PC-3 (cell line): ENCODE measurements at regions of chr11 and their contacts with region 1.

Region 1: DNA sequence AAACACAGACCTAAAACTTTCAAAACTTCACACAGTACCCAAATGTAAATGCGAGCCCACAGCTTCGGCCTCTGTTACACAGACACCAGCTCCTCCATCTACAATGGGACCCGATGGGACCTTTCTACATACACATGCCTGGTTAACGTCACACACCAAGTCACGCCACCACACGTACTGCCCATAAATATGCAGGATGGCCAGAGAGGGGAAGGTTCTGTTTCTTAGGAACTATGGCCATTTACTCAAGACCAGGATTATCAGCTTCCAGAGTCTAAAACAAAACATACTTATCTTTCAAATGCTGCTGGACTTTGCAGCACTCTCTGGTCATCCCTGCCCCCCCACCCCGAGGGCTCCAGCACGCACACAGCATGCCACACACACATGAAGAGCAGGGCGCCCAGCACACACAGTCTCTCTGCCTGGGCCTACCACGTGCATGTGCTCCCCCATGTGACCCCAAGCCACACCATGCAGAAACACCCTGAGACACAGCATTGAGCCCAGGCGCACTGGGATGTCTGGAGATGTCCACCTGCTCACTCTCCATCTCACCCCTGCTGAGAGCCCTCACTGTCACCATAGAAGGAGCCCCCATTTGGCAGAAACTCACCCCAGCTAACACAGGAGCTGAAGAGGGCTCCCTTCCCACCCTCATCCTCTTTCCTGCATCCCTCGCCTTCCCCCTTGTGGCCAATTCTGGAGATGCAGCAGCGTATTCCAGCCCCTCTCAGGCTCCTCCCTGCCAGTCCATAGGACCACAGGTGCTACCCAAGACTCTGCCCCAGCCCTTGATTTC is 61.8 kb downstream of the SLC22A12 start:
- DNase-seq: peak; percentile 93
- ATAC-seq: peak; percentile 91
- H3K4me3 ChIP-seq: no peak overlapping the region
- H3K27ac ChIP-seq: no peak overlapping the region
- H3K4me1 ChIP-seq: no peaks in the 10 kb centered on the region
- H3K27me3 ChIP-seq: no peaks in the 10 kb centered on the region
- CTCF ChIP-seq: peak; percentile 94

Region 2: GRCh38 chr11:64448599-64449556 is 203.9 kb before region 1 on chr11:
- CTCF ChIA-PET with region 1: interaction called, 4 read pairs
- POLR2A ChIA-PET with region 1: no interaction called
- intact Hi-C with region 1: loop called (anchors 1 kb)
- DNase-seq: peak; percentile 90
- ATAC-seq: peak; percentile 90
- H3K4me3 ChIP-seq: peak overlapping the region; percentile 62
- H3K27ac ChIP-seq: no peak overlapping the region
- H3K4me1 ChIP-seq: peaks cover 23% of the 10 kb centered on the region
- H3K27me3 ChIP-seq: no peaks in the 10 kb centered on the region
- CTCF ChIP-seq: peak; percentile 93

Region 3: GRCh38 chr11:64516226-64516625 is 136.6 kb before region 1 on chr11:
- CTCF ChIA-PET with region 1: no interaction called
- POLR2A ChIA-PET with region 1: no interaction called
- intact Hi-C with region 1: no loop called
- DNase-seq: no peak
- ATAC-seq: no peak
- H3K4me3 ChIP-seq: no peak overlapping the region
- H3K27ac ChIP-seq: no peak overlapping the region
- H3K4me1 ChIP-seq: no peaks in the 10 kb centered on the region
- H3K27me3 ChIP-seq: peaks cover 84% of the 10 kb centered on the region
- CTCF ChIP-seq: peak; percentile 58

Region 4: GRCh38 chr11:64553551-64554201 is 99.1 kb before region 1 on chr11:
- CTCF ChIA-PET with region 1: interaction called, 3 read pairs
- POLR2A ChIA-PET with region 1: no interaction called
- intact Hi-C with region 1: loop called (anchors 1 kb)
- DNase-seq: peak; percentile 65
- ATAC-seq: peak; percentile 54
- H3K4me3 ChIP-seq: no peak overlapping the region
- H3K27ac ChIP-seq: no peak overlapping the region
- H3K4me1 ChIP-seq: peaks cover 5% of the 10 kb centered on the region; the same call in 1 of the 2 replicates
- H3K27me3 ChIP-seq: peaks cover 6% of the 10 kb centered on the region; the same call in 1 of the 2 replicates
- CTCF ChIP-seq: peak; percentile 98

Region 5: GRCh38 chr11:64562728-64563685 is 89.8 kb before region 1 on chr11:
- CTCF ChIA-PET with region 1: interaction called, 12 read pairs
- POLR2A ChIA-PET with region 1: no interaction called
- intact Hi-C with region 1: no loop called
- DNase-seq: no peak
- ATAC-seq: no peak
- H3K4me3 ChIP-seq: no peak overlapping the region
- H3K27ac ChIP-seq: no peak overlapping the region
- H3K4me1 ChIP-seq: 0 out of 2 replicates have a peak, but pooled peaks cover 9% of the 10 kb centered on the region
- H3K27me3 ChIP-seq: no peaks in the 10 kb centered on the region
- CTCF ChIP-seq: no peak

Region 6: GRCh38 chr11:64688534-64688982 is 35.8 kb after region 1 on chr11:
- CTCF ChIA-PET with region 1: interaction called, 11 read pairs
- POLR2A ChIA-PET with region 1: no interaction called
- intact Hi-C with region 1: no loop called
- DNase-seq: peak; percentile 92
- ATAC-seq: peak; percentile 97
- H3K4me3 ChIP-seq: peak overlapping the region; percentile 61
- H3K27ac ChIP-seq: no peak overlapping the region
- H3K4me1 ChIP-seq: no peaks in the 10 kb centered on the region
- H3K27me3 ChIP-seq: peaks cover 16% of the 10 kb centered on the region
- CTCF ChIP-seq: peak; percentile 94

Region 7: DNA sequence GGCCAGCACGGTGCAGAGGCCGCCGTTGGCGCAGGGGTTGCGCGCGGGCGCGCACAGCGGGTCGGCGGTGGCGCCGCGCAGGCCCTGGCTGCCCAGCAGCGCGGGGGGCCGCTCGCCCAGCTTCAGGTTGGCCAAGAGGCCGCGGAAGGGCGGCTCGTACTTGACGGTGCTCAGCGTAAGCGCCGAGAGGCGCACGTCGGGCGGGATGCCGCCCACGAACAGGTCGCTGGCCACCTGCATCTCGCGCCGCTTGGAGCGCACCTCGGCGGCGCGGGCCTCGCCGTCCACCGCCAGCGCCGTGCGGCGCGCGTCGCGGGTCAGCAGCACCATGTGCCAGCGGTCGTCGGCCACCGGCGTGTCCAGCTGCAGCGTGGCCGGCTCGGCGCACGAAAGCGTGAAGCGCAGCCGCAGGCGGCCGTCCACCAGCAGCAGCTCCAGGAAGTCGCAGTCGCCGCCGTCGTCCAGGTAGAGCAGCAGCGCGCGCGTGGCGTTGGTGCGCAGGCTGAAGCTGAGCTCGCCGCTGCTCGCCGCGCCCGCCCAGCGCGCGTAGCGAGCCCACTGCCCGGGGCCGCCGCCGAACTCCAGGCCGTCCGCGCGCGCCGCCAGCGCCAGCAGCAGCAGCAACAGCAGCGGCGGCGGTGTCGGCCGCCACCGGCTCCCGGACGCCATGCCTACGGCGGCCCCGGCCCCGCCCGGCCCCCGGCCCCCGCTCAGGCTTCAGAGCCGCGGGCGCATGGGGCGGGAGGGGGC is 60.4 kb after region 1 on chr11:
- CTCF ChIA-PET with region 1: no interaction called
- POLR2A ChIA-PET with region 1: no interaction called
- intact Hi-C with region 1: no loop called
- DNase-seq: no peak
- ATAC-seq: no peak
- H3K4me3 ChIP-seq: no peak overlapping the region
- H3K27ac ChIP-seq: no peak overlapping the region
- H3K4me1 ChIP-seq: peaks cover 10% of the 10 kb centered on the region; the same call in 1 of the 2 replicates
- H3K27me3 ChIP-seq: peaks cover 53% of the 10 kb centered on the region
- CTCF ChIP-seq: no peak

Region 8: DNA sequence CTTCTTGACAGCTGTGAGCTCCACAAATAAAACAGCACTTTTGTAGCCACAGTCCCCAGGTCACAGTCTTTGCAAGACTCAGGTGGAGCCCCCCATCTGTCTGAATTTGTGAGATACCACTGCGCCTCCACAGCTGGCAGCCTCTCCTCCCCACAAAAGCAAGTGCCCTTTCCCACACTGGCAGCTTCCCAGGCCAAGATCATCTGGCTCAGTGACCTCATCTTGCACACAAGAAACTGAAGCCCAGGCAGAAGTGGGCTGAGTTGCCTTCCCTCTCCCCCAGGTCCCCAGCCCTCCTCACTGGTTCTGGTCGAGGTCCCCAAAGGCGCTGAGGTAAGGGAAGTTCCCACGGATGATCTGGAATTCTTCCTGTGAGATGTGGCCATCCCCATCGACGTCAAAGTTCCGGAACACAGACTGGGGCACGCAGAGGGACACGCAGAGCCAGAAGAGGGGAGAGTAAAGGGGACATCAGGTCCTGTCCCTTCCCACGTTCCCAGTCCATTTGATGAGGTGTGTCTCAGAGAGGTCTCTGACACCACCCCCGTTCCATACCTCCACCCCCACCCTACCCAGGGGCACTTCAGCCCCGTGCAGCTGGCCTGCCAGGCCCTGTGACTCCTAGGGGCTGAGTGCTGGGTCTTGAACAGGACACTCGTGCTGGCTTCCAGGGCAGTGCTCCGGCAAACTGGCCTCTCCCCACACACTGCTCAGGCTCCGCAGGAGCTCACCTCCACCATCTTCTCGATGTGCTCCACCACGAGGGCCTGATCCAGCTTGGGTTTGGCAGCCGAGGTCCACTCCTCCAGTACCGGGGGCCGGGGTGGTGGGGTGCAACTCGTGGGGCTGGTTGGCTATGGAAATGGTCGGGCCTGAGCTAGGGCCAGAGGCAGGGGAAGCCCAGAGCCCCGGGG is 82.3 kb after region 1 on chr11:
- CTCF ChIA-PET with region 1: no interaction called
- POLR2A ChIA-PET with region 1: no interaction called
- intact Hi-C with region 1: no loop called
- DNase-seq: no peak
- ATAC-seq: no peak
- H3K4me3 ChIP-seq: no peak overlapping the region
- H3K27ac ChIP-seq: no peak overlapping the region
- H3K4me1 ChIP-seq: no peaks in the 10 kb centered on the region
- H3K27me3 ChIP-seq: peaks cover 2% of the 10 kb centered on the region; the same call in 1 of the 2 replicates
- CTCF ChIP-seq: no peak

Region 9: GRCh38 chr11:65236194-65237059 is 583.6 kb after region 1 on chr11:
- CTCF ChIA-PET with region 1: no interaction called
- POLR2A ChIA-PET with region 1: no interaction called
- intact Hi-C with region 1: no loop called
- DNase-seq: no peak
- ATAC-seq: no peak
- H3K4me3 ChIP-seq: no peak overlapping the region
- H3K27ac ChIP-seq: no peak overlapping the region
- H3K4me1 ChIP-seq: peaks cover 12% of the 10 kb centered on the region; the same call in 1 of the 2 replicates
- H3K27me3 ChIP-seq: no peaks in the 10 kb centered on the region
- CTCF ChIP-seq: no peak